Left cardiac atrium (tissue), 4 donors: ENCODE measurements at regions of chr6 and their contacts with region 1.

Region 1: GRCh38 chr6:31197559-31198305 is 27.2 kb upstream of the POU5F1 start:
- DNase-seq: peak; percentile 94
- ATAC-seq: peak; percentile 90 to 92

Region 2: DNA sequence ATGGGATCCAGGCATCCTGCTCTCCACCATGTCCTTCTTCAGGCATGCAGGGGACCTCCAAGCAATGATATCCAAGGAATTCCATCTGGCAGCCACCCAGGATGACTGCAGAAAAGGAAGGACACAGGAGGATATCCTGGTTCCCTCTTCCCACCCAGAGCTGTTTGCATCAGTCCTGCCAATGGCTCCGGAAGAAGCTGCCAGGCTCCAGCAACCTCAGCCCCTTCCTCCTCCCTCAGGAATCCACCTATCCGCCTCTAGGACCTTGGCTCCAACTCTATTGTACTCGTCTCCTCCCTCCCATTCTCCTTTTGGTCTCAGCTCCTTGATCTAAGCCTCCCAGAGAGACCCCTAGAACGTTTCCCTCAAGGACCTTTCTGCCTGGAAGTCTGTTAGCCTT is 58.1 kb before region 1 on chr6:
- intact Hi-C with region 1: loop called (anchors 2 kb)
- DNase-seq: no peak
- ATAC-seq: no peak

Region 3: DNA sequence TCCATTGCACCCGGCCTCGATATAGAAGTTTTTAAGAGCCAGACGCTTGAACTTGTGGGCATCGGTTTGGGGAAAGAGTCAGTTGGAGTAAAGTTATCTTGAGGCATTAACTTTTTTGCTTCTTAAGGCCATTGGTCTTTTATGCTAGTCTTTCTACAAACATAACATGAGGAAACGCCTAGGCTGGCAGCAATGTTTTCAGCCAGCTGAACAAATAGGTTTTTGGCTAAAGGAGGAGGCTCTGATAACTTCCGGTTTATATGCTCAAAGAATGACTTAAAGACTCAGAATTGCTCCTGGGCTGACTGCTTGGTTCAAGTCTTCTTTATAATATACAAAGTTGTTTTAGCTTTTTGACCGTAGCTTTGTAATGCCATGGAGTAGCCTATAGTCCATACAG is 28.0 kb after region 1 on chr6:
- intact Hi-C with region 1: no loop called
- DNase-seq: no peak
- ATAC-seq: no peak

Region 4: GRCh38 chr6:31271641-31272357 is 74.1 kb after region 1 on chr6 and contains the start of gene HLA-C:
- intact Hi-C with region 1: loop called in 1 of 2 experiments (anchors 2 kb)
- DNase-seq: peak; percentile 93
- ATAC-seq: peak; percentile 97 to 98
- total RNA-seq, gene HLA-C: 235 to 362 TPM

Region 5: GRCh38 chr6:31366693-31367470 is 169.2 kb after region 1 on chr6:
- intact Hi-C with region 1: loop called (anchors 1 to 5 kb)
- DNase-seq: peak; percentile 88
- ATAC-seq: peak; percentile 100